Sigmoid colon (tissue), 7 donors: ENCODE measurements at regions of chr4 and their contacts with region 1.

Region 1: GRCh38 chr4:94127707-94128328 is 79.8 kb upstream of the SMARCAD1 start:
- DNase-seq: no peak
- H3K4me3 ChIP-seq: no peak overlapping the region
- H3K27ac ChIP-seq: no peak overlapping the region
- H3K4me1 ChIP-seq: no peaks in the 10 kb centered on the region
- H3K27me3 ChIP-seq: peaks cover 0 to 3% (median 0%) of the 10 kb centered on the region in 3 donors
- CTCF ChIP-seq: peak in 3 of 4 experiments; percentile 25 to 43 (median 35)
- EP300 ChIP-seq: no peak
- POLR2A ChIP-seq: no peak

Region 2: GRCh38 chr4:93461541-93461940 is 666.3 kb before region 1 on chr4:
- intact Hi-C with region 1: no loop called
- DNase-seq: no peak
- H3K4me3 ChIP-seq: no peak overlapping the region
- H3K27ac ChIP-seq: no peak overlapping the region
- H3K4me1 ChIP-seq: no peaks in the 10 kb centered on the region
- H3K27me3 ChIP-seq: no peaks in the 10 kb centered on the region
- CTCF ChIP-seq: no peak
- EP300 ChIP-seq: no peak
- POLR2A ChIP-seq: no peak

Region 3: DNA sequence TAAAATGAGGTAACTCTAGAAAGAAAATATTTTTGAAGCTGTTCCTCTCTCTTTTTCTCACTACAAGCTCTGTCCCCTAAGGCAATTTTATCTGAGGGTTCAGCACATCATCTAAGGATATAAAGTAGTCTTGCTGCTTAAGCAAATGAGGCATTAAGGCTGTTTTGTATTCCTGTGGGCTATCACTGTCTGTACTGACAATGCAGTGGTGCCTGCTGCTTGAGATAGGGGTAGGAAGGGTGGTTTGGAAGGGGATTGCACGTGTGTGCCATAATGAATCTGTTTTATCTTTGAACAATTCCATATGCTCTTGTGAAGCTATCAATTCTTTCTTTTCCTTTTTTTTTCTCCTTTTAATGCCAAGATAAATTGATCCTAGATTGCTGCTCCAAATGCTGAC is 427.2 kb before region 1 on chr4:
- intact Hi-C with region 1: no loop called
- DNase-seq: no peak
- H3K4me3 ChIP-seq: no peak overlapping the region
- H3K27ac ChIP-seq: no peak overlapping the region
- H3K4me1 ChIP-seq: no peaks in the 10 kb centered on the region
- H3K27me3 ChIP-seq: no peaks in the 10 kb centered on the region
- CTCF ChIP-seq: no peak
- EP300 ChIP-seq: no peak
- POLR2A ChIP-seq: no peak

Region 4: GRCh38 chr4:93791570-93792195 is 336.1 kb before region 1 on chr4:
- intact Hi-C with region 1: loop called (anchors 5 kb)
- DNase-seq: no peak
- H3K4me3 ChIP-seq: no peak overlapping the region
- H3K27ac ChIP-seq: no peak overlapping the region
- H3K4me1 ChIP-seq: no peaks in the 10 kb centered on the region
- H3K27me3 ChIP-seq: peaks cover 0 to 6% (median 0%) of the 10 kb centered on the region in 3 donors
- CTCF ChIP-seq: peak; percentile 15 to 71 (median 50)
- EP300 ChIP-seq: no peak
- POLR2A ChIP-seq: no peak